ENCODE measurements at regions of chr10 and their contacts with region 1.

Region 1: DNA sequence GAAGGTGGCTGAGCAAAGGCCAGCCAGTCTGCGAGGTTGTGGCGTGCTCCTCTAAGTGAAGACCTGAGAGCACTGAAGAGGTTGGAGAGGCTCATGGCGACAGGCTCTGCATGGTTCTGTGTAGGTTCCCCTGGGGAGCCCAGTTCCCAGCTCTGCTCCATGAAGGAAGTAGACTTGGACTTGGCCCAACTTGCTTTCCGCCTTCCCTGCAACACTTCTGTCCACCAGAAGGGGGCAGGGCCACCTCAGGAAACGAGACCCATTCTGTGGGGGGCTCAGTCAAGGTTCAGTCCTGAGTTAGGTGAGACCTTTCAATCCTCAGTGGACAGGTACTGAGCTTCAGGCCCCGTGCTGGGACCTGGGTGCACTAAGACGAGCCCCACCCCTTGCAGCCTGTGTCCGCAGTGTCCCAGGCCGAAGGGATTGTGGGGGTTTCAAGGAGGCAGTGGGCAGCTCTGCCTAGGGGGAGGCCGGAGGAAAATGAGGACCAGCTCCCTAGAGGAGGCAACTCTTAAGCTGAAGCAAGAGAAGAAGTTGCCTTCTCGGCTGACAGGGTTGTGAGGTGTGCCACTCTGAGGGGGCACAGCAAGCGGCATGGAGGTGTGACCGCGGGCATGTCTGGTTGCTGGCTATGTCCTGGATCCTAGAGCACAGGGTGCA is 15.0 kb upstream of the PCBD1 start:
- DNase-seq: peak; percentile 41 to 61 (median 57)
- H3K4me3 ChIP-seq: no peak overlapping the region
- H3K27ac ChIP-seq: no peak overlapping the region
- H3K4me1 ChIP-seq: no peaks in the 10 kb centered on the region
- H3K27me3 ChIP-seq: no peaks in the 10 kb centered on the region

Region 2: DNA sequence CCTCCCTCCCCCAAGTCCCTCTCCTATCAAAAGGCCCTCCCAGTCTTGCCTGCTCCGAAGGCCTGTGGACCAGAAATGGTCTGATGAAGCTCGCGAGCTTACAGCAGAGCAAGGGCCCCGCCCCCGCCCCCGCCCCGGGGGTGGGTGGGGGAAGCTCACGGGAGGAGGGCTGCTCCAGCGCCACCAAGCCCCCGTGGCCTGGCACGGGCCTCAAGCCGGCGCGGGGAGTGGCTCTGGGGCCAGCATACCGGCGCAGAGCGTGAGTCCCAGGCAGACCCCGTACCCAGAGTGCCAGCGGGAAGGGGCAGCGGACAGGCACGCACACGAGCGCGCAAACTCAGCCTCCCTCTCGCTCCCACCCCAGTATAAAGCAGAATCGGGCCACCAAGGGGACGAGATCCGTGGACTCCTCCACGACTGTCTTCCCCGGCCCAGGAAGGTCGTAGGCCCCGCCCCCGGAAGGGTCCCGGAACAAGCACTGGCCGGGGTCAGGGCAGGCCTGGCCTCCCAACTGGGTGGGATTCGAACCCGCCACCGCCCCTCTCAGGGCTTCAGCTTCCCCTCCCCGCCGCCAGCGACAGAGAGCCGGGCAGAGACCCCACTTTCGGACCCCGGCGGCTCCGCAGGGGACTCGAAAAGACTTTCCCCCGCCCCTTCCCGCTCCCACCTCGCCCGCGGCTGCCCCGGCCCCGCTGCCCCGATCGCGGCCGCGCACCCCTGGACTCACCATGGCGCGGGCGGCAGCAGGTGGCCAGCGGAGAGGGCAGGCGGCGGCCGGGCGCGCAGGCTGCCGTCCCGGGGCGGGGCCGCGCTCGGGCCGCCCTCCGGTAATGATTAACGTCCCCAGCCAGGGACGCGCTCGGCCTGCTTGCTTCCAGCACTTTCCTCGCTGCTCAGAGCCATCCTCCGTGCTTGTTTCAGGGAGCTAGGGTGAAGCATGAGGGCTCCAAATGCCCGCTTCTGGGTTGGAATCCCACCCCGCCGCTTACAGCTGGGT is 15.3 kb before region 1 on chr10 and contains the start of gene PCBD1:
- CTCF ChIA-PET with region 1: interaction called, 10 read pairs
- POLR2A ChIA-PET with region 1: no interaction called
- DNase-seq: peak; percentile 74 to 88 (median 82)
- H3K4me3 ChIP-seq: peak within 1 kb of the TSS; percentile 66 to 87 (median 72)
- H3K27ac ChIP-seq: peak within 1 kb of the TSS in 1 of 2 experiments; percentile 76
- H3K4me1 ChIP-seq: peaks cover 0 to 30% (median 23%) of the 10 kb centered on the region in 4 experiments
- H3K27me3 ChIP-seq: no peaks in the 10 kb centered on the region

Measured in common myeloid progenitor, CD34-positive (primary cell).